IMR-90 (cell line): ENCODE measurements at regions of chr12 and their contacts with region 1.

Region 1: GRCh38 chr12:32568241-32568640 is 110.9 kb upstream of the DNM1L start:
- DNase-seq: peak; percentile 90
- ATAC-seq: peak; percentile 94
- H3K4me3 ChIP-seq: no peak overlapping the region
- H3K27ac ChIP-seq: no peak overlapping the region
- H3K4me1 ChIP-seq: peaks cover 15% of the 10 kb centered on the region
- H3K27me3 ChIP-seq: no peaks in the 10 kb centered on the region
- CTCF ChIP-seq: no peak
- POLR2A ChIP-seq: no peak
- RAD21 ChIP-seq: no peak

Region 2: GRCh38 chr12:31589904-31590641 is 978.2 kb before region 1 on chr12:
- CTCF ChIA-PET with region 1: no interaction called
- POLR2A ChIA-PET with region 1: no interaction called
- dilution Hi-C with region 1: no loop called
- in situ Hi-C with region 1: no loop called
- intact Hi-C with region 1: no loop called
- DNase-seq: peak; percentile 58
- ATAC-seq: peak; percentile 54
- H3K4me3 ChIP-seq: peak overlapping the region; percentile 73
- H3K27ac ChIP-seq: peak overlapping the region; percentile 79
- H3K4me1 ChIP-seq: peaks cover 7% of the 10 kb centered on the region
- H3K27me3 ChIP-seq: no peaks in the 10 kb centered on the region
- CTCF ChIP-seq: no peak
- POLR2A ChIP-seq: peak; percentile 63; the same call in 1 of the 2 replicates
- RAD21 ChIP-seq: no peak

Region 3: GRCh38 chr12:31736472-31736871 is 831.8 kb before region 1 on chr12:
- CTCF ChIA-PET with region 1: no interaction called
- POLR2A ChIA-PET with region 1: no interaction called
- dilution Hi-C with region 1: no loop called
- in situ Hi-C with region 1: no loop called
- intact Hi-C with region 1: no loop called
- DNase-seq: peak; percentile 89
- ATAC-seq: peak; percentile 75
- H3K4me3 ChIP-seq: no peak overlapping the region
- H3K27ac ChIP-seq: no peak overlapping the region
- H3K4me1 ChIP-seq: peaks cover 2% of the 10 kb centered on the region; the same call in 1 of the 2 replicates
- H3K27me3 ChIP-seq: no peaks in the 10 kb centered on the region
- CTCF ChIP-seq: no peak
- POLR2A ChIP-seq: no peak
- RAD21 ChIP-seq: no peak

Region 4: GRCh38 chr12:32312049-32312670 is 256.1 kb before region 1 on chr12:
- CTCF ChIA-PET with region 1: no interaction called
- POLR2A ChIA-PET with region 1: no interaction called
- dilution Hi-C with region 1: no loop called
- in situ Hi-C with region 1: no loop called
- intact Hi-C with region 1: no loop called
- DNase-seq: peak; percentile 72
- ATAC-seq: peak; percentile 76
- H3K4me3 ChIP-seq: no peak overlapping the region
- H3K27ac ChIP-seq: no peak overlapping the region
- H3K4me1 ChIP-seq: peaks cover 2% of the 10 kb centered on the region; the same call in 1 of the 2 replicates
- H3K27me3 ChIP-seq: no peaks in the 10 kb centered on the region
- CTCF ChIP-seq: peak; percentile 69
- POLR2A ChIP-seq: no peak
- RAD21 ChIP-seq: peak; percentile 59

Region 5: GRCh38 chr12:32583534-32583933 is 15.3 kb after region 1 on chr12:
- CTCF ChIA-PET with region 1: no interaction called
- POLR2A ChIA-PET with region 1: no interaction called
- dilution Hi-C with region 1: no loop called
- in situ Hi-C with region 1: no loop called
- intact Hi-C with region 1: loop called (anchors 2 kb)
- DNase-seq: peak; percentile 78
- ATAC-seq: peak; percentile 92
- H3K4me3 ChIP-seq: no peak overlapping the region
- H3K27ac ChIP-seq: no peak overlapping the region; the same call in 1 of the 2 replicates
- H3K4me1 ChIP-seq: peaks cover 11% of the 10 kb centered on the region
- H3K27me3 ChIP-seq: no peaks in the 10 kb centered on the region
- CTCF ChIP-seq: no peak
- POLR2A ChIP-seq: no peak
- RAD21 ChIP-seq: no peak

Region 6: DNA sequence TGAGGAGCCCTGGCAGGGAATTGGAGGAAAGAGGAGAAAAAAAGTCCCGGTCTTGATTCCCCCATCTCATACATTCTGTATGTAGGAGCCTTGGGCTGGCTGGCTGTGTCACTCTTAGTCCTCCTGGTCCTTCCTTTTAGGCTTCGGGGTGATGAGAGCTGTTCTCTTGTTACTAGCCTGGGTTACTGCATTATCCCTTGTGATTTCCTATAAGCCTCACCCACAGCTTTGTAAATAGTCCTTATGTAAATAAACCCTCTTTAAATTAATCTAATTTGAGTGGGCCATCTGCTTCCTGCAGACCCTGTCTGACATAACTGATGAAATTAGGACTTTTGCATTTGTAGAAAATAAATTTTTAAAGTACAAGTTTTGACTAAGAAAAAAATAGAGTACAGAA is 130.0 kb after region 1 on chr12:
- CTCF ChIA-PET with region 1: no interaction called
- POLR2A ChIA-PET with region 1: no interaction called
- dilution Hi-C with region 1: no loop called
- in situ Hi-C with region 1: no loop called
- intact Hi-C with region 1: no loop called
- DNase-seq: no peak
- ATAC-seq: peak; percentile 66
- H3K4me3 ChIP-seq: no peak overlapping the region
- H3K27ac ChIP-seq: no peak overlapping the region
- H3K4me1 ChIP-seq: peaks cover 5% of the 10 kb centered on the region; the same call in 1 of the 2 replicates
- H3K27me3 ChIP-seq: no peaks in the 10 kb centered on the region
- CTCF ChIP-seq: no peak
- POLR2A ChIP-seq: no peak
- RAD21 ChIP-seq: no peak